Panc1 (cell line): ENCODE measurements at regions of chr11 and their contacts with region 1.

Region 1: DNA sequence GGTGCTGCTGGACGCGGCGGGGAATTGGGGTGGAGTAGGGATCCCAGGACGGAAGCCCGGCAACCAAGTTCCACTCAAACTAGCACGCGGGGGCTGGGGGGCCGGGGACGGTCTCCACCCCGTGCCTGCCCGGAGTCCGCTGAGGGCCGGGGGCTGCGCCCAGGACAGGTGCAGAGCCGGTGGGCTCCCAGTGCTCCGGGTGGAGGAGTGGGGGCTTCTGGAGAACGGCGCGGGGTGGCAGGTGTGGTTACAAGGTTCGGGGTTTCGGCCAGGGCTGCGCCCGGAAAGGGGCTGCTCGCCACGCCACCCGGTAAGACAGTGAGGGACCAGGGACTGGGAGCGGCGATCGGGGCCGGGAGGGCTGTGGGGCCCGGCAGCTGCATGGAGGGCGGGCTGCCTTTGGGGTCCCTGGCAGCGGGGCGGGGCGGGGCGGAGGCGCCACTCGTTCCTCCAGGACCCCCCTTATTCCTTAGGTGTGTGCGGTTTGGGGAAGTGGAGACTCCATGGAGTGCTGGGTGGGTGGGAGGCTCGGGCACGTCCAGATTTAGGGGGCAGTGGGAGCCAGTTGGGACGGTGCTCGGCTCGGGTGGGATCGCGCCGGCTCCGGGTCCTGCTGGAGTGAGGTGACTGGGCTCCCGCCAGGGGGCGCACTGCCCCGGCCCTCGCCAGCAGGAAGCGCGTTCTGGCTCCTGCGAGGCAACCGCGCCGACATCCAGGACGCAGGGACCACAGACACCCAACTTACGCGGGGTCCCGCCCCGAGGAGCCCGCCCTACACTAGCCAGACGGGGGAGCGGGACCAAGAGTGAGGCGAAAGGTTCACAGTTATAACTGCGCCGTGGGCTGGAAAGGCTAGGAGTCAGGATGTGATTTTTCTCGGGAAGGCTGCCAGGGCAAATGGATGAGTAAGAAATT is 868 bp downstream of the TSPAN18 start:
- DNase-seq: peak; percentile 20
- ATAC-seq: peak; percentile 95
- H3K4me3 ChIP-seq: peak overlapping the region; percentile 51 to 69
- H3K27ac ChIP-seq: no peak overlapping the region
- H3K4me1 ChIP-seq: peaks cover 14% of the 10 kb centered on the region
- H3K27me3 ChIP-seq: no peaks in the 10 kb centered on the region; the same call in 1 of the 2 replicates
- CTCF ChIP-seq: peak; percentile 97

Region 2: DNA sequence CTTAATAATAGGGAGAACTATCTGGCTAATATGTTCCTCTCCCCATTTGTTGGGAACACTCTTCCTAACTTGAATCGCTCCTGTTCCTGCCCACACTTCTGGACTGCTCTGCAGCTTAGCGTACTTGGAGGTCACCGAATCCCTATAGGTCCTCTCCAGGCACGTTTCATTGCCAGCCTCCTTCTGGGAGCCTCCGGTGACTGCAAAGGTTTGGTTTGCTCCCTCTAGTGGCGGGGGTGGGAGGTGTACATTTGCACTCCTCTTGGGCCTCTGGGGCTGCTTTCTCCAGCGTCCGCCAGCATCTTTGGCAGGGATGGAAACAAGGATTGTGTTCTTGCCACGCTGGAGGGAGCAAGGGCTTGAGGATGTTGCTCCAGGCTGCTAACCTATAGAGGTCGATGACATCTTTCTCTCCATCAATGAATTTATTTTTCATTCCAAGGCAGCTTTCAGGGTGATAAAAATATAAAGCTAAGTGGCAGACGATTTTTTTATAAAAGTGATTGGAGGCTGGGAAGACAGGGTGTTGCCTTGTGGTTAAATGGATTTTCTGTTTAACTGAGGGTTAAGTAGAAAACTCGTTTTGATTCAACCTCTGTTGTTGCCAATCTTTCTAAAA is 47.8 kb after region 1 on chr11:
- CTCF ChIA-PET with region 1: no interaction called
- POLR2A ChIA-PET with region 1: no interaction called
- in situ Hi-C with region 1: no loop called
- intact Hi-C with region 1: loop called (anchors 5 kb)
- DNase-seq: peak; percentile 27
- ATAC-seq: peak; percentile 95
- H3K4me3 ChIP-seq: no peak overlapping the region
- H3K27ac ChIP-seq: no peak overlapping the region
- H3K4me1 ChIP-seq: peaks cover 7% of the 10 kb centered on the region
- H3K27me3 ChIP-seq: no peaks in the 10 kb centered on the region
- CTCF ChIP-seq: peak; percentile 91

Region 3: DNA sequence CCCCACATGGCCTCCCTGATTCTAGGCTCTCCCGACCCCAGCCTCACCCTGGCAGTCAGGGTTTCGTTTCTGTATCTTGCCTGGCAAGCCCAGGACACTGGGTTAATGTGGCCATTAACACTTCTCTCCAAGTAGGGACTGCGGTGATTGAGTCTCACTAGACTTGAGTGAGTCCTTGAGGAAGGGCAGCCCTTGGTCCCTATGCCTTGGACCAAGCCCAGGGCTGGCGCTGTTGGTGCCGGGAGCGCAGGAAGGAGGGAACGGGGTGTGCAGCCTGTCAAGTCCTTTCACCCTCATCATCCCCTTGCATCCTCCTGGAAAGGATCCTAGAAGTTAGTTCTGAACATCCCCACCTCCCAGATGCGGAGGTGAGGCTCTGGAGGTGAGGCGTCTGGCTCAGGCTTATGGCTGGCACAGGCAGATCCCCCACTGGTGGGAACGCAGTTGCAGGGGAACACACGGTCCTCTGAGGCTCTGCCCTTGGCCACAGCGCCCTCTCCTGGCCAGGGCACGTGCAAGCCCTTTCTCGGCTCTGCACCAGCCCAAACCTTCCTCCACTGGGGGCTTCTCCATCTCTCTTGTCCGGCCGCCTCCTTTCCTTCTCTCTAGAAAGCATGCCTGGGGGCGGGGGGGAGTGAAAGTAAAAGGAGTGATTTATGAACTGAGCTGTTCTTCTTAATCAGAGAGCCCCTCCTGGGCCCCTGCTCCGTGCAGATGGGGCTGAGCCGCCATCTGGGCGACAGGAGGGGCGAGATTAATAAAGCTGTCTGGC is 166.4 kb after region 1 on chr11:
- CTCF ChIA-PET with region 1: no interaction called
- POLR2A ChIA-PET with region 1: no interaction called
- in situ Hi-C with region 1: no loop called
- intact Hi-C with region 1: loop called (anchors 5 kb)
- DNase-seq: no peak
- ATAC-seq: peak; percentile 93
- H3K4me3 ChIP-seq: no peak overlapping the region
- H3K27ac ChIP-seq: no peak overlapping the region
- H3K4me1 ChIP-seq: 0 out of 2 replicates have a peak, but pooled peaks cover 6% of the 10 kb centered on the region
- H3K27me3 ChIP-seq: no peaks in the 10 kb centered on the region
- CTCF ChIP-seq: peak; percentile 93

Region 4: GRCh38 chr11:44911029-44911814 is 183.6 kb after region 1 on chr11:
- CTCF ChIA-PET with region 1: no interaction called
- POLR2A ChIA-PET with region 1: no interaction called
- in situ Hi-C with region 1: no loop called
- intact Hi-C with region 1: loop called (anchors 5 kb)
- DNase-seq: no peak
- ATAC-seq: peak; percentile 96
- H3K4me3 ChIP-seq: no peak overlapping the region
- H3K27ac ChIP-seq: no peak overlapping the region
- H3K4me1 ChIP-seq: peaks cover 3% of the 10 kb centered on the region; the same call in 1 of the 2 replicates
- H3K27me3 ChIP-seq: no peaks in the 10 kb centered on the region
- CTCF ChIP-seq: peak; percentile 85